Posterior vena cava (tissue), 2 donors: ENCODE measurements at regions of chr2 and their contacts with region 1.

Region 1: GRCh38 chr2:115294999-115295398 is 852.6 kb downstream of the DPP10 start:
- DNase-seq: no peak

Region 2: GRCh38 chr2:114769991-114770390 is 525.0 kb before region 1 on chr2:
- intact Hi-C with region 1: loop called in 1 of 2 experiments (anchors 5 kb)
- DNase-seq: no peak

Region 3: DNA sequence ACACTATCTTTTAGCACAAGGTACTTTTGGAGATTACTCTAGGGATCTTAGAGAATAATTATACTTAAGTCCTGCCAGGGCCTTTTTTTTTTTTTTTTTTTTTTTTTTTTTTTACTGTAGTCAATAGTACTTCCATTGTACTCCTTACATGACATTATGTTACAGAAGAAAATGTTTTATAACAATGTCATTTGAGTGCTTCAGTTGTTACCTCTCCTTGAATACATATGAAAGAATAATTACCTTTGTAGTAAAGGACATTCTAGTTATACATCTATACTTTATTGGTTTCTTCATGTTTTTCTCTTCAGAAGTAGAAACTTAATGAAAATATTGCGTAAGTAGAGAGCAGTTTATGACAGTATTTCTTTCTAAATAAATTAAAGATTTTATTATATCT is 17.6 kb before region 1 on chr2:
- intact Hi-C with region 1: no loop called
- DNase-seq: no peak